Naive thymus-derived CD4-positive, alpha-beta T cell (primary cell): ENCODE measurements at regions of chr5 and their contacts with region 1.

Region 1: DNA sequence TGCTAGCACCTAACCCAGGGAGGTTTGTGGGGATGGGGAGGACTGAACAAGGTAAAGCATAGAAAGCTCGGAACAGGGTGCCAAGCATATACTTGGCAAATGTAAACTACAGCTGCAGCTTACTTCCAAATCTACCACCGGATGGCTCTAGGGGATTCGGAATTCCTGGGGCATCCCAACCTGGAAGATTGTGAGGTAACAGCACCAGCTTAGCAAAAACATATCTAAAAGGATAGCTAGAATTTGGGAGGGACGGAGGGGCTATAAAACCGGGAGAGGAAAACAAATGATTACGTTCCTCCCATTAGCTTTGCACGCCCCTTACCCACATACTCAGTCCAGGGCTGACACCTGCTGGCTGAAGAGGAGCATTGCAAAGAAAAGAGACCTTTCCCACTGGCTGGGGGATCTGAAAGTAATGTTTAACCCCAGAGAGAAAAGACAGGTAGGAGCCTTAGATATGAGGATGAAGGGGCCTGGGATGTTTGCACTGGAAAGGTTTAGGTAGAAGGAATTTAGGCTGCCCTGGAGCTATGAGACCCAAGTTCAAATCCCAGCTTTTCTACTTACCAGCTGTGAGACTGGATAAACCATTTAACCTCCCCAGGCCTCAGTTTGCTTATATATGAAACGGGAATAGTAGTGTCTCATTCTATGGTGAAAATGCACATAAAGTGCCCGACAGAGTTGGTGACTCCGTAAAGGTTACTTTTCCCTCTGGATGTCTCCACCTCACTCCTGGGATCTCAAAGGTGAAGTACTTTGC is 73.6 kb downstream of the FAM114A2 start:
- DNase-seq: peak in 6 of 9 donors; percentile 8 to 33 (median 14)
- ATAC-seq: peak; percentile 73
- H3K4me3 ChIP-seq: no peak overlapping the region
- H3K4me3 Mint-ChIP-seq: no peak overlapping the region
- H3K27ac ChIP-seq: no peak overlapping the region
- H3K27ac Mint-ChIP-seq: no peak overlapping the region
- H3K4me1 ChIP-seq: peaks cover 0 to 11% of the 10 kb centered on the region in 2 donors
- H3K4me1 Mint-ChIP-seq: peaks cover 0 to 17% (median 0%) of the 10 kb centered on the region in 7 donors
- H3K27me3 ChIP-seq: no peaks in the 10 kb centered on the region
- H3K27me3 Mint-ChIP-seq: peaks cover 0 to 8% (median 5%) of the 10 kb centered on the region in 5 donors

Region 2: DNA sequence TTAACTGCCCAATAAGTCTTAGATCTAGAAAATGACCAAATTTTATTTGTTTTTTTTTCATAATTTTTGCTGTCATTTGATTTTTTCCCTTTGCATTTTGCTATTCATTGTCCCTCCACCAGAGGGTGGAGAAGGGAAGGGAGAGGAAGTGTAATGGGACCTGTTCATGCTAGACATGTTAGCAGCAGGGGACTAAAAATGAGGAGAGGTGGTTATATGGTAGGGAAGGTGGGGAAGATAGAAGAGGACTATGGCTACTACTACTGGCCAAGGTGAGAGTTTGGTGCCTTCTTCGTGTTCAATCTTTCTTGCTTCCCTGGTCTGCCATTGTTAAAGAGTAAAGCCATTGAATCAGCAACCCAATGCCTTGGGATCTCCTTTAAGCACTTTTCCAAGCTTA is 468.2 kb before region 1 on chr5:
- CTCF ChIA-PET with region 1: no interaction called
- POLR2A ChIA-PET with region 1: no interaction called
- intact Hi-C with region 1: loop called in 1 of 2 experiments (anchors 2 kb)
- DNase-seq: no peak
- ATAC-seq: no peak
- H3K4me3 ChIP-seq: no peak overlapping the region
- H3K4me3 Mint-ChIP-seq: no peak overlapping the region
- H3K27ac ChIP-seq: no peak overlapping the region
- H3K27ac Mint-ChIP-seq: no peak overlapping the region
- H3K4me1 ChIP-seq: no peaks in the 10 kb centered on the region
- H3K4me1 Mint-ChIP-seq: no peaks in the 10 kb centered on the region
- H3K27me3 ChIP-seq: no peaks in the 10 kb centered on the region
- H3K27me3 Mint-ChIP-seq: peaks cover 6 to 23% (median 13%) of the 10 kb centered on the region in 5 donors

Region 3: DNA sequence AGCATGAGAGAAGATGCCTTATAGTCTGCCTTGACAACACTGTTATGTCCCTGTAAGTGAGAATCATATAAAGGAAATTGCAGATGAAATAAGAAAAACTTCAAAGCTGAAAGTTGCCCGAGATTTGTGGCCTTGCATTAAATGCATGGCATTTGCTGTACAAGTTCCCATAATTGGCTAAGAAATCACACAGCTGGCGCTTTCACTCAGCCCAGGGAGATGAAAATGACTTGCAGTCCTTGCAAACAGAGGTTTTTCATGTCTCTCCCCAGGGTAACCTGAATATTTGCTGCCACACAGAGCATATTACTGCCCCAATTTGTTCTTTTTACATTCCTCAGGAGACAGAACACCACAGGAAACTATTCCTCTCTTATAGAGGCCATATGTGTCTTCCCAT is 101.1 kb before region 1 on chr5:
- CTCF ChIA-PET with region 1: no interaction called
- POLR2A ChIA-PET with region 1: no interaction called
- intact Hi-C with region 1: no loop called
- DNase-seq: no peak
- ATAC-seq: no peak
- H3K4me3 ChIP-seq: no peak overlapping the region
- H3K4me3 Mint-ChIP-seq: no peak overlapping the region
- H3K27ac ChIP-seq: no peak overlapping the region
- H3K27ac Mint-ChIP-seq: no peak overlapping the region
- H3K4me1 ChIP-seq: no peaks in the 10 kb centered on the region
- H3K4me1 Mint-ChIP-seq: no peaks in the 10 kb centered on the region
- H3K27me3 ChIP-seq: no peaks in the 10 kb centered on the region
- H3K27me3 Mint-ChIP-seq: peaks cover 0 to 23% (median 15%) of the 10 kb centered on the region in 5 donors